ENCODE measurements at regions of chrX and their contacts with region 1.

Region 1: DNA sequence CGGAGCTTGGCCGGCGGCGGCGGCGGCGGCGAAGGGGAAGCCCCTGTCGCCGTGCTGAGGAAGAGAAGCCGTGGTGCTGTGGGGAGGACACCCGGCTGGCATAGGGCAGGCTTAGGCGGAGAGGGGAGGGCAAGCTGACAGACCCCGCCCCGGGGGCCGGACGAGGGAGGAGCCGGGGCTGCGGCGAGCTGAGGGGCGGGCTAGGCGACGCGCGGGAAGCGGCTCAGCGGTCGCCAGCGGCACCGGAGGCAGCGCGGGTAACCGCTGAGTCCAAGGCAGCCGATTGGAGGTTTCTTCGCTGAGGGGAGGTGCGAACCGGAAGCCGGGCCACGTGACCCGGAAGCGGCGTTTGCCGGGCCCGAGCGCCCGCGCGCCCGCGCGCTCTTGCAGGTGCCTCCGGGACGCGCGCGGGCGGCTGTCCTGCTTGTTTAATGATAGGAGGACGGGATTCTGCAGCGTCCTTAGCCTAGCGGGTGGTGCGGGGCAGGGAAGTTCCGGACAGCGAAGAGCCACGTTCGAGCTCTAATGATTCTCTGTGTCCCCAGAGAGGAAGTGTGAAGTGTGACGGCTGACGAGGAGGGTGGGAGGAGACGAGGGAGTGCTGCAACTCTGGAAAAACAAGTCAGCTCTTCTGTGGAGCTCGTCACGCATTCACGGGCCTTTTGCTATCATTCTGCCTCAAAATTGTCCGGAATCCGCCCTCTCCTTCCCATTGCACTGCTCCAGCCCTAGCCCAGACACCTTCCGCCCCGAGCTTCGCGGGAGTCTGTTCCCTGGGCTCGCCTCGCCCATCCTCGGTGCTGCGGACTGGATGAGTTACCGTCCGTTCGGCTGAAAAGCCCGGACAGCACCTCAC is at the start of gene AP1S2:
- DNase-seq: peak; percentile 88 to 97 (median 95)
- H3K4me3 ChIP-seq: peak within 1 kb of the TSS; percentile 33 to 85 (median 73)
- H3K27ac ChIP-seq: peak within 1 kb of the TSS; percentile 62 to 95 (median 89)
- H3K27me3 ChIP-seq: peaks cover 0 to 62% (median 8%) of the 10 kb centered on the region in 45 donors
- CTCF ChIP-seq: peak in 5 of 56 donors; percentile 13 to 34 (median 20)
- total RNA-seq, gene AP1S2: 33.9 to 89.2 (median 63.3) TPM

Region 2: GRCh38 chrX:15643786-15644559 is 211.0 kb before region 1 on chrX:
- intact Hi-C with region 1: no loop called
- DNase-seq: no peak
- H3K4me3 ChIP-seq: no peak overlapping the region
- H3K27ac ChIP-seq: no peak overlapping the region
- H3K27me3 ChIP-seq: peaks cover 0 to 77% (median 27%) of the 10 kb centered on the region in 45 donors
- CTCF ChIP-seq: no peak

Region 3: DNA sequence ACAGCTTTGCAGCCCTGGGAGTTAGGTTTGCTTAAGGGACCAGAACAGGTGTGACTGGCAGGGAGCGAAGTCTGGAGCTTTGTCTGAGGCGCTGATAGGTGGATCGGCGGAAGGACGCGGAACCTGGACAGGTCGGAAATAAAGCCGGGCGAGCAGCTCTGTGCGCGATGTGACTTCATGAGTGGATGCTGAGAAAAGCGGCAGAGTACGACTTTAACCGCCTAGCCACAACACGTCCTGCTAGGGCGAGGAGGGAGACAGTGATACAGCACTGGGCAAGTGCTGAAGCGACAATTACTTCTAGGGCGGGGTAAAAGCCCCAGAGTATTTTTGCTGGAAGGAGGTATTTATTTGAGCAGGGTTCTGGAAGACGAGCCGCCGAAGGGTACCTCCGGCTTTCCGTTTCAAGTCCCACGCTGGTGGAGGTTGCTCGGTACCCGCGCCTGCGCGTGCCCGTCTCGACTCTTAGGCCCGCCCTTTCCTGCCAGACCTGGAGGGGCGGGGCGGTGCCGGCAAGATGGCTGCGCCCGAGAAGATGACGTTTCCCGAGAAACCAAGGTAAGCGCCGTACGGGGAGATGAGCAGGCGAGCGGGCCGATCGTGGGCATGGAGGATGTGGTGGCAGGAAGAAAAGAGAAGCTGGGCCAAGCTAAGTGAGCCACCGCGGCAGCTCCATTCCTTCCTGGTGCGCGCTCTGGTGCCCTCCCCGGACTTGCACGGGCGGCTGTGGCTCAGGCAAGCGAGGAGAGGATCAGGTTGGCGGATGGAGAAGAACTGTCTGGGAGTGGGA is 64.8 kb before region 1 on chrX and contains the start of gene ZRSR2:
- intact Hi-C with region 1: loop called in 1 of 2 experiments (anchors 2 kb)
- DNase-seq: peak; percentile 79 to 94 (median 90)
- H3K4me3 ChIP-seq: peak within 1 kb of the TSS; percentile 42 to 99 (median 81)
- H3K27ac ChIP-seq: peak within 1 kb of the TSS in 58 of 59 donors; percentile 32 to 93 (median 79)
- H3K27me3 ChIP-seq: no peaks in the 10 kb centered on the region
- CTCF ChIP-seq: peak in 14 of 56 donors; percentile 5 to 35 (median 12)
- total RNA-seq, gene ZRSR2: 8.9 to 29.9 (median 17.8) TPM

Region 4: DNA sequence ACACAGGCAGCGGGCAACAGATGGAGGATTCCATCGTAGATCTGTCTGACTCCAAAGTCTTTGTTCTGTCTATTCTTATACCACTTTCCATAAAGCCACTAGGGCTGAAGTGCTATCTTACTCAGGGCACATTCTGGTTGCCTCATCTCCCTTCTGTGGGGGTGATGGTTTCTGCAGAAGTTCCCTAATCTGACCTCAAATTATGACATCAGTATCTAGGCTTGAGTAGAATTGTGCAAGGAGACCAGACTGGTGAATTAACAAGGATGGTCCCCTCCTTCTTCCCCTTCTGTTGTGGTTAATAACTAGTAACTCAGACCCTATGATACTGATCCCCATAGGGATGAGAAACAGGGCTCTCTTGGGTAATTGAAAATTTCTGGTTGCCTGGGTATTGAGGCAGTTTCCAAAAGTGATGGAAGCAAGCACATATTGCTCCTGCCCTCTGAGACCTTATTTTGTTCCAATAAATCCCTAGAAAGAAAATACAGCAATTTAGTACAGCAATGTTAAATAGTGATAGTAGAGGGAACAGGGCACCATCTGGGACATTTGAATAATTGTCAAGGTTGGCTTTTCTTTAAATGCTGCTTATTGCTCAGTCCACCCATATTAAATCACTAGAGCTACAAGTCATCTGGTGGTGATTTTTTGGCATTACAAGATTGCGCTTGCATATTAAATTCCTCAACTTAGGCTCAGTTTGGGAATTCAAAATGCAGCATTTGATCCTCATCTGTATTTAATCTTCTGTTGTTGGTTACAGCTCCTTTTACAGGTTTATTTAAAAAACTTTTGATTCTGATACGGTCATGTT is 57.0 kb after region 1 on chrX:
- intact Hi-C with region 1: loop called in 1 of 2 experiments (anchors 10 kb)
- DNase-seq: no peak
- H3K4me3 ChIP-seq: no peak overlapping the region
- H3K27ac ChIP-seq: no peak overlapping the region
- H3K27me3 ChIP-seq: peaks cover 0 to 78% (median 8%) of the 10 kb centered on the region in 45 donors
- CTCF ChIP-seq: no peak

Region 5: GRCh38 chrX:15973299-15973698 is 118.4 kb after region 1 on chrX:
- intact Hi-C with region 1: loop called (anchors 2 to 5 kb)
- DNase-seq: peak in 5 of 10 donors; percentile 6 to 50 (median 40)
- H3K4me3 ChIP-seq: no peak overlapping the region
- H3K27ac ChIP-seq: no peak overlapping the region
- H3K27me3 ChIP-seq: peaks cover 0 to 62% (median 8%) of the 10 kb centered on the region in 45 donors
- CTCF ChIP-seq: peak in 55 of 56 donors; percentile 20 to 73 (median 55)

Region 6: GRCh38 chrX:16786139-16786790 is 931.3 kb after region 1 on chrX and contains the start of gene TXLNG:
- intact Hi-C with region 1: loop called in 1 of 2 experiments (anchors 10 kb)
- DNase-seq: peak; percentile 99 to 100 (median 100)
- H3K4me3 ChIP-seq: peak within 1 kb of the TSS; percentile 43 to 92 (median 77)
- H3K27ac ChIP-seq: peak within 1 kb of the TSS in 53 of 59 donors; percentile 9 to 92 (median 79)
- H3K27me3 ChIP-seq: peaks cover 0 to 8% (median 0%) of the 10 kb centered on the region in 45 donors
- CTCF ChIP-seq: peak in 17 of 56 donors; percentile 12 to 55 (median 29)
- total RNA-seq, gene TXLNG: 10.9 to 20.8 (median 16.2) TPM

Measured in dorsolateral prefrontal cortex (tissue), 120 donors.